GM12878 (cell line): ENCODE measurements at regions of chr11 and their contacts with region 1.

Region 1: DNA sequence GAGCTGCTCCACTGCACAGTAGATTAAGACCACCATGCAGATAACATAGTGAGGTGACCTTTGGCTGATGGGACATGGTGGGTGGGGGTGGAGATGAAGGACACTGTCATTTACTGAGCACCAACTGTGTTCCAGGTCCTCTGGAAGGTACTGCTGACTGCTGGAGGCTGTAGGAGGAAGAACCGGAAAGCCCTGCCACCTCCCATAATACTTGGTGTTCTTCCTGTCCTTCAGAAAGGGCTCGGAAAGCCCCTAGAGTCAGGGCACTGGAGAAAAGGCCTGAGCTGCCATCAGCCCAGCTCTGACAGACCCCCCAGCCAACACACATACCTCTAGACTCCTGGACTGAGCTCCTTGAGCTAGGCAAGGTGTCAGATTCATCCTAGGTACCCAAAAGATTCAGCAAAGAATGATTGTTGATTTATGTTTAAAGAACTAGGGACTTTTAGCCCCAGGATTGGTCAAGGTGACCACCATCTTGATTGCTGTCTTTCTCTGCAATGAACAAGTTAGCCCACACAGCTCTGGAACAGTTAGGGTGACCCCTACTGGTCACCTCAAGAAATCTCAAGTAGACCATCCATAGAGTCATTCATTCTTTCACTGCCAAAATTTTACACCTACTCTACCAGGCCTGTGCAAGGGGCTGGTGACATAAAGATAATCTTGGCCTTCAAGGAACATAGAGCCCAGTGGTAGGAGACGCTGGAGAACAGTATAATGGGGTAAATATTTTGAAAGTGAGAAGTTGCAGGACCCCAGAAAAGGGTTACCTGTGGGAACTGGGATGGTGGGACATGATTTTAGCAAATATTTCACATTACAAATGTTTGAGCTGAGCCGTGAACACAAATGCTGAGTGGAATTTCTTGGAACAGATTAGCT is 39.4 kb downstream of the IRAG1 start:
- DNase-seq: peak; percentile 23
- ATAC-seq: peak; percentile 74
- H3K4me3 ChIP-seq: no peak overlapping the region
- H3K27ac ChIP-seq: no peak overlapping the region
- H3K4me1 ChIP-seq: peaks cover 30% of the 10 kb centered on the region
- H3K27me3 ChIP-seq: no peaks in the 10 kb centered on the region; a peak in 1 of 4 replicates
- CTCF ChIP-seq: peak; percentile 67 to 74 (median 68)
- EP300 ChIP-seq: no peak
- POLR2A ChIP-seq: no peak
- RAD21 ChIP-seq: peak; percentile 89

Region 2: DNA sequence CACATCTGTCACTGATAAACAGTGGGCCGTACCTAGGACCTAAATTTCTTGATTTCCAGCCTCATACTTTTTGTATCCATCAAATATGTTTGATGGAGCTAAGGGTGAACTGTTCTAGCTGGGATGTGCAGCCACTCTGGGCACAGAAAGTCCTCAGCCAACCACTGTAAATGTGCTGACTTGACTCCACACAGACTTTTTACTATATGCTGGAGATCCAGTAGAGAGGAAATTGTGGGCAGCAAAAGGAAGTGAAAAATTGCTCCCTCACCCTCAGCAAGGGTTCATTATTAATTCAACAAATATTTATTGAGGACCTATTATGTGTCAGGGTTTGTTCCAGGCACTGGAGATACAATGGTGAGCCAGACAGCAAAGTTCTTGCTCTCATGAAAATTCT is 253.3 kb before region 1 on chr11:
- CTCF ChIA-PET with region 1: interaction called, 55 read pairs
- POLR2A ChIA-PET with region 1: no interaction called
- RAD21 ChIA-PET with region 1: interaction called, 12 read pairs
- SMC1A ChIA-PET with region 1: interaction called, 26 read pairs
- in situ Hi-C with region 1: loop called (anchors 5 kb)
- intact Hi-C with region 1: loop called (anchors 1 kb)
- DNase-seq: no peak
- ATAC-seq: peak; percentile 27; the same call in 1 of the 3 replicates
- H3K4me3 ChIP-seq: no peak overlapping the region
- H3K27ac ChIP-seq: no peak overlapping the region
- H3K4me1 ChIP-seq: no peaks in the 10 kb centered on the region
- H3K27me3 ChIP-seq: no peaks in the 10 kb centered on the region
- CTCF ChIP-seq: no peak
- EP300 ChIP-seq: no peak
- POLR2A ChIP-seq: no peak
- RAD21 ChIP-seq: no peak

Region 3: GRCh38 chr11:10413268-10413667 is 240.9 kb before region 1 on chr11:
- CTCF ChIA-PET with region 1: interaction called, 120 read pairs
- POLR2A ChIA-PET with region 1: no interaction called
- RAD21 ChIA-PET with region 1: interaction called, 63 read pairs
- SMC1A ChIA-PET with region 1: interaction called, 70 read pairs
- in situ Hi-C with region 1: loop called (anchors 5 kb)
- intact Hi-C with region 1: loop called (anchors 1 kb)
- DNase-seq: no peak
- ATAC-seq: peak; percentile 94
- H3K4me3 ChIP-seq: no peak overlapping the region
- H3K27ac ChIP-seq: no peak overlapping the region
- H3K4me1 ChIP-seq: peaks cover 7% of the 10 kb centered on the region; the same call in 1 of the 2 replicates
- H3K27me3 ChIP-seq: no peaks in the 10 kb centered on the region; a peak in 1 of 4 replicates
- CTCF ChIP-seq: peak; percentile 44 to 50 (median 49); a peak in 4 of 6 replicates
- EP300 ChIP-seq: no peak
- POLR2A ChIP-seq: no peak
- RAD21 ChIP-seq: peak; percentile 89

Region 4: GRCh38 chr11:10514210-10514609 is 140.0 kb before region 1 on chr11:
- CTCF ChIA-PET with region 1: interaction called, 9 read pairs
- POLR2A ChIA-PET with region 1: no interaction called
- RAD21 ChIA-PET with region 1: no interaction called
- SMC1A ChIA-PET with region 1: interaction called, 4 read pairs
- in situ Hi-C with region 1: no loop called
- intact Hi-C with region 1: loop called (anchors 5 kb)
- DNase-seq: no peak
- ATAC-seq: no peak
- H3K4me3 ChIP-seq: no peak overlapping the region
- H3K27ac ChIP-seq: no peak overlapping the region
- H3K4me1 ChIP-seq: no peaks in the 10 kb centered on the region
- H3K27me3 ChIP-seq: no peaks in the 10 kb centered on the region
- CTCF ChIP-seq: no peak; a peak in 1 of 6 replicates
- EP300 ChIP-seq: no peak
- POLR2A ChIP-seq: no peak
- RAD21 ChIP-seq: no peak

Region 5: DNA sequence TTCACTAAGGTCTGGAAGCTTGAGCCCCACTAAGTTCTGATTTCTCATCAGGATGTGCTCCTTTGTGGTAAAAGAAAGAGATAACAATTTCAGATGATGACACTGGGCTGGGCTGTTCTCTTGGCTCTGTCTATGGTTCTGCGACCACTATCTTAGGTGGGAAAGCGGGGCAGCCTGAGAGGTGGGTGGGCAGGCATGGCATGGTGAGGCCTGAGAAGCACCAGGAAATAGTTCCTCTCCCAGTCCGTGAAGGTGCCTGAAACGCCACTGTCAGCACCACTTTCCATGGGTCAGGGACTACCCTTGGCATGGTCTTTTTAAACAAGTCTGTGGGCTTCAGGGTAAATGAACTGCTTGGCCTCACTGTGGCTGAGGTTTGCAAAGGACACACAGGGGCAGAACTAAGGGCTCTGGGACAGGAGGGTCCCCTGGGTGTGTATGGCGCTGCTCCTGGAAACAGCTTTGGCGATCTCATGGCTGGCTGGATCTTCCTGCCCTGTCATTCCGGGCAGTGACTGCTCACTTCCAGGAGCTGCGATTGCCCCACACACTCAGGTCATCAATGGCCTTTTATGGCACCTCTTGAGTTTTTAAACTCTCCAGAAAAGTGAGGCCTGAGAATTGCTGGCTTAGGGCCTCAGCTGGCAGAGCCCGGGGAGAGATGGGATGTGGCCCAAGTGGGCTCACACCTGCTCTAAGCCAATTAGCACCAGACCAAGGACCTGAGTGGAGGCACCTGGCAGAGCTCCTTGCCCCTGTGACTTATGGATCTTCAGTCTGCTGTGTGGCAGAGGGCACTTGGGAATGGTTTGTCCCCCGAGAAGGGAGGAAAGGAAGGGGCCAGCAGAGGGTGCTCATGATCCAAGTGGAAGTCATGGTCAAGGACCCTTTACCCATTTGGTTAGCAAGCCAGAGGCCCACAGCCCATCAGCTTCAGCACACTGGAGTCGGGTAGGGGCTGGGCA is 30.1 kb before region 1 on chr11:
- CTCF ChIA-PET with region 1: interaction called, 66 read pairs
- POLR2A ChIA-PET with region 1: no interaction called
- RAD21 ChIA-PET with region 1: interaction called, 34 read pairs
- SMC1A ChIA-PET with region 1: interaction called, 25 read pairs
- in situ Hi-C with region 1: no loop called
- intact Hi-C with region 1: loop called (anchors 2 kb)
- DNase-seq: no peak
- ATAC-seq: peak; percentile 57
- H3K4me3 ChIP-seq: no peak overlapping the region
- H3K27ac ChIP-seq: no peak overlapping the region
- H3K4me1 ChIP-seq: no peaks in the 10 kb centered on the region
- H3K27me3 ChIP-seq: peaks cover 0 to 2% of the 10 kb centered on the region in 2 experiments; a peak in 1 of 4 replicates
- CTCF ChIP-seq: peak; percentile 56 to 63 (median 58)
- EP300 ChIP-seq: no peak
- POLR2A ChIP-seq: no peak
- RAD21 ChIP-seq: peak; percentile 69

Region 6: DNA sequence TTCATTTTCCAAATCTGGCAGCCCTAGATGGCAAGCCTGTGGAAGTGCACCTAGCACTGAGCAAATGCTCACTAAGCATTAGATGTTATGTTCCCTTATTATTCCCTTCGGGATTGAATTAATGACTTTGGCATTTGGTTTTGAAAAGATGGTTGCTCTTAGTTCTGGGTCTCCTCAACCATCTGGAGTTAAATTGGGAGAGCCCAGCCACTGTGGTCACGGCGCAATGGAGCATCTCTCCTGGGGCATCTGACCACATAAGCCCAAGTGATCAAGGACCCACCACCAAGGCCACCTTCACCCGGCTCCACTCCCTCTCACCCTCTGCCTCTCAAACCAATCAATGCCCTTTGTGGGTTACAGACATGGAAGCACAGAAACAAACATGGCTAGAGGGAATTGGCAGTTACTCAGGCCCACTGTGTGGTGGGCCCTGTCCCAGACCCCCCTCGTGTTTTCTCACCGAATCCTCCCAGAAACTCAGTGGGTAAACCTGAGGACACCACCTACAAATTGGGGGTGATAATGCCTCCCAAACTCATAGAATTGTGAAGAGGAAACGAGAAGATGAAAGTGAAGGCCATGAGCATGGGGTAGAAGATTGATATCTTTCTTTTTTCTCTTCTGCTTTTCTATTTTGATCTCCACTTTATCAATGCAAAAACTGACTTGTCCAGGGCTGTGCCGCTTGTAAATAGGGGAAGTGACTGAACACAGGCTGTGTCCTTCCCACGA is 12.8 kb before region 1 on chr11:
- CTCF ChIA-PET with region 1: interaction called, 22 read pairs
- POLR2A ChIA-PET with region 1: interaction called, 5 read pairs
- RAD21 ChIA-PET with region 1: interaction called, 10 read pairs
- SMC1A ChIA-PET with region 1: interaction called, 5 read pairs
- in situ Hi-C with region 1: no loop called
- intact Hi-C with region 1: no loop called
- DNase-seq: peak; percentile 62
- ATAC-seq: peak; percentile 95
- H3K4me3 ChIP-seq: no peak overlapping the region
- H3K27ac ChIP-seq: peak overlapping the region; percentile 92
- H3K4me1 ChIP-seq: peaks cover 33% of the 10 kb centered on the region
- H3K27me3 ChIP-seq: no peaks in the 10 kb centered on the region
- CTCF ChIP-seq: no peak
- EP300 ChIP-seq: peak; percentile 47 to 71; a peak in 1 of 4 replicates
- POLR2A ChIP-seq: no peak
- RAD21 ChIP-seq: 0 out of 2 replicates have a peak, but pooled peaks have one; percentile 5

Region 7: DNA sequence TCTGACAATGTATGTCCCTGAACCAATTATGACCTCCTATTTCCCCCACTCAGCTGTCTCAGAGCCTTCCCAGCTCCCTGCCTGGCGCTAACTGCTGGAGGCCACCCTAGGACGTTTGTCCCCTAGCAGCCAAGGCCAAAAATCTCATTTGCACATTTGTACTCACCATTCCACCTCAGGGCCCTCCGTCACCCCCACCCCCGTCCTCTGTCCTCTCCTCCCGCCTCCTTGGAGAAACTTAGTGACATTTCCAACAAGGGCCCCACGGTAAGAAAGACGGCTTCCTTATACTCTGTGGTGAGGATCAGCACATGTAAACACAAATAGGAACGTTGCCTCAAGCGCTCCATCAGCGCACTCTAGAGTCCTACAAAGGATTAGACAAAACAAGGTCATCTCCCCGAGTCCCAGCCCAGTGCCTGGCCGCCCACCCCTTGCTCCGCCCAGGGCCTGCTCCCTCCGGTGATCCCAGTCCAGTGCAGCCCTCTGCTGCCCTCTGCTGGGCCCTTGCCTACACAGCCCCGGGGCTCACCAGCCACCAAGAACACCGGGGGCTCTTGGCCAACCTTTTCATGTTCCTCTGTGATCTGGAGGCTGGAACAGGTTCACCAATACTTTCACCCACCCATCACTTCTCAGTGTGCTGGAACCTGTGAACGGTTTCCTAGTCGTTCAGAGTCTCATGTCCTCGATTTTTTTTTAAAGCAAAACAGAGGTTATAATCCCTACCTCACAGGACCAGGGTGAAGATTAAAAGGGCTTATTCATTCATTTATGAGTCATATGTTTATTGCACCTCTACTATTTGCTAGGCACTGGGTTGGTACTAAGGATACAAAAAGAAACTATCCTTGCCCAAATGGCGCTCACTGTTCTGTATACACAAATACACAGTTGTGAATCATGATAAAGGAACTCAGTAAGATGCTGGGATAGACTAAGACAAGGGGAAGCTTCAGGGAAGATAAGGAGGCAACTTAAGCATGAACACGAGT is 81.6 kb after region 1 on chr11:
- CTCF ChIA-PET with region 1: interaction called, 14 read pairs
- POLR2A ChIA-PET with region 1: no interaction called
- RAD21 ChIA-PET with region 1: interaction called, 4 read pairs
- SMC1A ChIA-PET with region 1: interaction called, 7 read pairs
- in situ Hi-C with region 1: no loop called
- intact Hi-C with region 1: loop called (anchors 2 kb)
- DNase-seq: peak; percentile 35
- ATAC-seq: peak; percentile 100
- H3K4me3 ChIP-seq: no peak overlapping the region
- H3K27ac ChIP-seq: no peak overlapping the region
- H3K4me1 ChIP-seq: peaks cover 3% of the 10 kb centered on the region; the same call in 1 of the 2 replicates
- H3K27me3 ChIP-seq: no peaks in the 10 kb centered on the region
- CTCF ChIP-seq: peak; percentile 93 to 99 (median 95)
- EP300 ChIP-seq: no peak
- POLR2A ChIP-seq: no peak
- RAD21 ChIP-seq: peak; percentile 92

Region 8: DNA sequence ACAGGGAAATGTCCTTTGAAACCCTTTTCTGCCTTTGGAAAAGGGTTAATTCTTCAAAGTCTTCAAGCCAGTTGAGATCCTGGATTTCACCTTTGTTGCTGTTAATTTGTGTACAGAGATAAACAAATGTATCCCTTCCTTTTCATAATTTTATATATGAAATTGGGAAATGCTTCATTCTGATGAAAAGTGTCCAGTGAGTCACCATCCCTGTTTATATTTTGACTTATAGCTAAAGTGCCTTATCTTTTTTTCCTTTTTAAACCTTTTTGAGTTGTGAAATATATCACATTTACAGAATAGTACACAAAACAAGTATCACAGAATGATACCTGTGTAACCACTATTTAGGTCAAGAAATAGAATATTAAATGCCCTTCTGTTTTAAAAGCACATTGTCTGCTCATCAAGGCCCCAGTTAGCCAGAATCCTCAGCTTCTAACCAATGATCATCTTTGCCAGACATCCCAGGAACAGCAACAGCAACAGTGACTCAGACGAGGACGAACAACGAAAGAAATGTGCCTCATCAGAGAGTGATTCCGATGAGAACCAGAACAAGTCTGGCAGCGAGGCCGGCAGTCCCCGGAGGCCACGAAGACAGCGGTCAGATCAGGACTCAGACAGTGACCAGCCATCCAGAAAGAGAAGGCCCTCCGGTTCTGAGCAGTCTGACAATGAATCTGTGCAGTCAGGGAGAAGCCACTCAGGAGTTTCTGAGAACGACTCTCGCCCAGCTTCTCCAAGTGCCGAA is 124.2 kb after region 1 on chr11:
- CTCF ChIA-PET with region 1: no interaction called
- POLR2A ChIA-PET with region 1: no interaction called
- RAD21 ChIA-PET with region 1: no interaction called
- SMC1A ChIA-PET with region 1: no interaction called
- in situ Hi-C with region 1: no loop called
- intact Hi-C with region 1: no loop called
- DNase-seq: no peak
- ATAC-seq: no peak
- H3K4me3 ChIP-seq: no peak overlapping the region
- H3K27ac ChIP-seq: no peak overlapping the region
- H3K4me1 ChIP-seq: no peaks in the 10 kb centered on the region
- H3K27me3 ChIP-seq: no peaks in the 10 kb centered on the region
- CTCF ChIP-seq: no peak
- EP300 ChIP-seq: no peak
- POLR2A ChIP-seq: no peak
- RAD21 ChIP-seq: no peak

Region 9: DNA sequence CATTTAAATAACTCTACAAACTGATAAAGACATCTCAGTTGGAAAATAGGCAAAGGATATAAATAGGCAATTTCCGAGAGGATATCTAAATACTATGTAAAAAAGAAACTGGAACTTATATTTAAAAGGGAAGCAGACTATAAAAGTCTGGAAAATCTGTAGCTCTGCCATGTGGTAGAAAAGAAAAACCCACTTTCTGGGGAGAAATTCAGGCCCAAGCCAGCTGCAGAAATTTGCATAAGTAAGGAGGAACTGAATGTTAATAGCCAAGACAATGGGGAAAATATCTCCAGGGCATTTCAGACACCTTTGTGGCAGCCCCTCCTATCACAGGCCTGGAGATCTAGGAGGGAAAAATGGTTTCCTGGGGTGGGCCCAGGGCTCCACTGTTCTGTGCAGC is 301.4 kb after region 1 on chr11:
- CTCF ChIA-PET with region 1: no interaction called
- POLR2A ChIA-PET with region 1: no interaction called
- RAD21 ChIA-PET with region 1: no interaction called
- SMC1A ChIA-PET with region 1: no interaction called
- in situ Hi-C with region 1: no loop called
- intact Hi-C with region 1: no loop called
- DNase-seq: no peak
- ATAC-seq: no peak
- H3K4me3 ChIP-seq: no peak overlapping the region
- H3K27ac ChIP-seq: no peak overlapping the region
- H3K4me1 ChIP-seq: no peaks in the 10 kb centered on the region
- H3K27me3 ChIP-seq: no peaks in the 10 kb centered on the region
- CTCF ChIP-seq: no peak
- EP300 ChIP-seq: no peak
- POLR2A ChIP-seq: no peak
- RAD21 ChIP-seq: no peak